ENCODE measurements at regions of chr14 and their contacts with region 1.

Region 1: GRCh38 chr14:79552778-79553177 is 658.5 kb downstream of the DIO2 start:
- DNase-seq: peak; percentile 91 to 92
- H3K4me3 ChIP-seq: no peak overlapping the region
- H3K4me3 Mint-ChIP-seq: peak overlapping the region; percentile 62
- H3K27ac Mint-ChIP-seq: peak overlapping the region; percentile 90
- H3K4me1 ChIP-seq: peaks cover 63% of the 10 kb centered on the region
- H3K4me1 Mint-ChIP-seq: peaks cover 49% of the 10 kb centered on the region
- H3K27me3 ChIP-seq: no peaks in the 10 kb centered on the region
- H3K27me3 Mint-ChIP-seq: no peaks in the 10 kb centered on the region
- CTCF ChIP-seq: no peak

Region 2: DNA sequence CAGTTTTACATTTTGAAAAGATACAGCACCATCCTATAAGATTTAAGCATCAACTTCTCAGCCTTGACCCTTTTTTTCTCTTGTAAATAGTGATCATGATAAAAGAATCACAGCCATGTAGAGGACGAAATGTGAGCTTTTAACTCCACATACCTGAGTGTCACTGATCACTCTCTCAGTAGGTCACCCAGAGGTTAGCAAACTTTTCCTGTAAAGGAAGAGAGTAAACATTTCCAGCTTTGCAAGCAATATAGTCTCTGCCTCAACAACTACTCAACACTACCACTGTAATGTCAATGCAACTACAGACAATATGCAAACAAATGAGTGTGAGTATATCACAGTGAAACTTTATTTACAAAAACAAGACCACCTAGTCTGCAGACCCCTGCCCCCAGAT is 253.6 kb before region 1 on chr14:
- CTCF ChIA-PET with region 1: no interaction called
- POLR2A ChIA-PET with region 1: no interaction called
- intact Hi-C with region 1: loop called (anchors 5 kb)
- DNase-seq: peak in 1 of 2 experiments; percentile 50
- H3K4me3 ChIP-seq: no peak overlapping the region
- H3K4me3 Mint-ChIP-seq: no peak overlapping the region
- H3K27ac Mint-ChIP-seq: peak overlapping the region; percentile 78
- H3K4me1 ChIP-seq: peaks cover 47% of the 10 kb centered on the region
- H3K4me1 Mint-ChIP-seq: peaks cover 25% of the 10 kb centered on the region
- H3K27me3 ChIP-seq: no peaks in the 10 kb centered on the region
- H3K27me3 Mint-ChIP-seq: no peaks in the 10 kb centered on the region
- CTCF ChIP-seq: no peak

Region 3: GRCh38 chr14:79419571-79420327 is 133.0 kb before region 1 on chr14:
- CTCF ChIA-PET with region 1: no interaction called
- POLR2A ChIA-PET with region 1: no interaction called
- intact Hi-C with region 1: loop called (anchors 10 kb)
- DNase-seq: peak in 1 of 2 experiments; percentile 20
- H3K4me3 ChIP-seq: no peak overlapping the region
- H3K4me3 Mint-ChIP-seq: no peak overlapping the region
- H3K27ac Mint-ChIP-seq: no peak overlapping the region
- H3K4me1 ChIP-seq: peaks cover 27% of the 10 kb centered on the region
- H3K4me1 Mint-ChIP-seq: peaks cover 21% of the 10 kb centered on the region
- H3K27me3 ChIP-seq: no peaks in the 10 kb centered on the region
- H3K27me3 Mint-ChIP-seq: no peaks in the 10 kb centered on the region
- CTCF ChIP-seq: no peak

Region 4: GRCh38 chr14:79571366-79571765 is 18.6 kb after region 1 on chr14:
- CTCF ChIA-PET with region 1: no interaction called
- POLR2A ChIA-PET with region 1: no interaction called
- intact Hi-C with region 1: loop called (anchors 1 kb)
- DNase-seq: no peak
- H3K4me3 ChIP-seq: no peak overlapping the region
- H3K4me3 Mint-ChIP-seq: no peak overlapping the region
- H3K27ac Mint-ChIP-seq: no peak overlapping the region
- H3K4me1 ChIP-seq: peaks cover 14% of the 10 kb centered on the region
- H3K4me1 Mint-ChIP-seq: peaks cover 21% of the 10 kb centered on the region
- H3K27me3 ChIP-seq: no peaks in the 10 kb centered on the region
- H3K27me3 Mint-ChIP-seq: no peaks in the 10 kb centered on the region
- CTCF ChIP-seq: no peak

Region 5: DNA sequence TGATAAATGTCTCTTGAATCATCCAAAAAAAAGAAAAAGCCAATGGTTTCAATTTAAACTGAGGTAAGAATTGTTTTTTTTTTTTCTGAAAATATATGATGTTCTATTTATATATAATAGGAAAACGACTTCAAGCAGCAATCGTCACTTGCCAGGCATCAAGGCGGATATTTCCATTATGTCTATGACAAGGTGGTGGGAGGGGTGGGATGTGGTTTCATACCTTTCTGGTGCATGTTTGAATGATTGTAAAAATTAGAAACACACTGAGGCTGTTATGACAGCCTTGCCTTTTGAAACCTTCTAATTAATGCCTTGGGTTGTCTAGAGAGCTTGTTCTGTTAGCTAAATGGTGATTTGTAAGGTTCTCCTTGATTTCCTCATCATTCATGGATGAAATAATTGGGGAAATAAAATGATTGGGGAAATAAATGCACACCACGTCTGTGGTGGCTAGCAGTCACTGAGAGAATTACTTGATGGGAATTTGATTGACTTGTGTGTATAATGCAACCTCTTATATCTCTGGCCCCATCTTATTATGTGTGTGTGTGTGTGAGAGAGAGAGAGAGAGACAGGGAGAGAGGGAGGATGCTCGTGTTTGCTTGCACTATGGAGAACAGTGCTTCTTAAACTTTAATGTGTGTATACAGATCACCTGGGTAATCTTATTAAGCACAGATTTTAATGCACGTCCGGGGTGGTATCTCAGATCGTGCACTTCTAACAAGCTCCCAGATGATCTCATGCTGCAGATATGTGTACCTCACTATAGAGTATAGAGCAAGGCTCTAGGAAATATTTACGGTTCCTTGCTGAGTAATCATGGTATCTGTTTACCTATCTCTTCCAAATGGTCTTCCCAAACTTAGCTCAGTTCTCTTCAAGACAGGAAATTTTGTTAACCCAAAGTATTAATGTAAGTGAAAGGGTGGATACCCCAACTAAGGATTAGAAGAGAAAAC is 155.9 kb after region 1 on chr14:
- CTCF ChIA-PET with region 1: interaction called, 6 read pairs
- POLR2A ChIA-PET with region 1: no interaction called
- intact Hi-C with region 1: loop called (anchors 1 kb)
- DNase-seq: peak; percentile 33 to 37
- H3K4me3 ChIP-seq: no peak overlapping the region
- H3K4me3 Mint-ChIP-seq: peak overlapping the region; percentile 22
- H3K27ac Mint-ChIP-seq: peak overlapping the region; percentile 38
- H3K4me1 ChIP-seq: peaks cover 61% of the 10 kb centered on the region
- H3K4me1 Mint-ChIP-seq: peaks cover 51% of the 10 kb centered on the region
- H3K27me3 ChIP-seq: no peaks in the 10 kb centered on the region
- H3K27me3 Mint-ChIP-seq: no peaks in the 10 kb centered on the region
- CTCF ChIP-seq: no peak

Measured in Caco-2 (cell line).